ENCODE measurements at regions of chr2 and their contacts with region 1.

Region 1: DNA sequence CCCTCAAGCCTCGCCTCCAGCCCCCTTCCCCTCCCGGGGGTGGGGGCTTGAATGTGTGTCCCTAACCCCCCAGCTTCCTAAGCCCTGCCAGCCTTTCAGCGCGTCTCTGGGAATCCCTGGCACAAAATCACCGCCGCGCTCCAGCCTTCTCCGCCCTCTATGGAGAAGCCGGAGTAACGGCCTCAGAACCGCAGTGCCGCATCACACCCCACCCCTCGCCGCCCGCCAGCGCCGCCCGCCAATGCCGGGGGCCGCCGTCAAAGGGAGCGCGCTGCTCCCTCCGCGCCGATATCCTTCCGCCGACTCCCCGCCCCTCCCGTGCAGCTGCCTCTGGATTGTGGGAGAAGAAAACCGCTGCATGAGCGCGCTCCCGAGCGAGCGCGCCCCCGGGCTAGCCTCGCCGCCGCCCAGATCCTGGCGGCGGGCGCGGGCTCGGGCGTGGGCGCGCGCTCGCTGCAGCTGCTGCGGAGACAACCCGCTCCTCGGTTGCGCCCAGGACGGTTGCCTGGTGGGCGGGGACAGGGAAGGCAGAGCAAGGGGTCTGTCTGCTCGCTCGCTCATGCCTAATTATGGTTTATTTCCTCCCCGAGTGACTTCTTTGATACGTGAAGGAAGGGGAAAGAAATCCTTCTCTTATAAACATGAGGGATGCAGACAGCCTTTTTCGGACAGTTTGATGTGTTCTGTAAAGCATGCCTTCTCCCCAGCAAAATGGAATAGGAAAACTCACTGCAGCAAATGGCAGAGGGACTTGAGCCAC is at the start of gene CCDC88A:
- DNase-seq: peak; percentile 96
- H3K4me3 ChIP-seq: peak within 1 kb of the TSS; percentile 84 to 93
- H3K27ac ChIP-seq: peak within 1 kb of the TSS; percentile 81 to 97
- H3K4me1 ChIP-seq: peaks cover 4 to 12% of the 10 kb centered on the region in 2 experiments; a peak in 3 of 4 replicates
- H3K27me3 ChIP-seq: no peaks in the 10 kb centered on the region
- CTCF ChIP-seq: peak; percentile 35
- EP300 ChIP-seq: peak; percentile 50 to 71; a peak in 2 of 4 replicates
- RAD21 ChIP-seq: peak; percentile 4
- polyA plus RNA-seq, gene CCDC88A: 7.0 and 10.1 TPM in 2 replicates

Region 2: GRCh38 chr2:55150834-55151233 is 269.0 kb before region 1 on chr2:
- CTCF ChIA-PET with region 1: no interaction called
- POLR2A ChIA-PET with region 1: no interaction called
- DNase-seq: no peak
- H3K4me3 ChIP-seq: no peak overlapping the region
- H3K27ac ChIP-seq: no peak overlapping the region
- H3K4me1 ChIP-seq: peaks cover 14 to 31% of the 10 kb centered on the region in 2 experiments; a peak in 3 of 4 replicates
- H3K27me3 ChIP-seq: no peaks in the 10 kb centered on the region
- CTCF ChIP-seq: no peak
- EP300 ChIP-seq: no peak
- RAD21 ChIP-seq: no peak

Region 3: DNA sequence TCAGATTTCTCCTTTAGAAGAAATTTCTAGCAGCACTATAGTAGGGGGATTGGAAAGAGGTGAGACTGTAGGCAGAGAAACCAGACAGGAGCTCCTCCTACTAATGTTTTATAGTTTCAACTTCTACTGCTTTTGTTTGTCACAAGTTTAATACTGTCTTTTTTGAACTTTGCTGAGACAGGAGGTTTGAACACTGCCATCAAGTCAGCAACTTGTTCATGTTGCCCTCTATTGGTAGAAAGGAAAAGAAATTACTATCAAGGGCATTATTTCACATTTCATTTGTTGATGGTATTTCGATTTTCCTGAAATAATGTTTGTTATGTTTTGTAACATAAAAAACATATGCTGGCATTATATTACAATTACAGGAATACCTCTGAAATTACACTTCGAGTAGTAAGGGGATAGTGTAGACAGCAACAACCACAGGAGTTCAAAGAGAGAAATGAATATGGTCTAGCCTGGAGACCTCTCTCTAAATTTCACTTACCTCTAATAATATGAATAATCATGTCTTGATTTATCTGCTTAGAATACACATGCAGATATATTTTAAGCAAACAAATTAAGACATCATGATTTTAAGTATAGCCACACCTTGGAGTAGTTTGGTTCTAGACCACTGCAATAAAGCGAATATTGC is 12.2 kb after region 1 on chr2:
- CTCF ChIA-PET with region 1: interaction called, 11 read pairs
- POLR2A ChIA-PET with region 1: interaction called, 4 read pairs
- DNase-seq: peak; percentile 39
- H3K4me3 ChIP-seq: no peak overlapping the region
- H3K27ac ChIP-seq: no peak overlapping the region
- H3K4me1 ChIP-seq: no peaks in the 10 kb centered on the region
- H3K27me3 ChIP-seq: no peaks in the 10 kb centered on the region
- CTCF ChIP-seq: peak; percentile 83
- EP300 ChIP-seq: no peak
- RAD21 ChIP-seq: peak; percentile 86

Measured in SK-N-SH (cell line).